ENCODE measurements at regions of chr5 and their contacts with region 1.

Region 1: DNA sequence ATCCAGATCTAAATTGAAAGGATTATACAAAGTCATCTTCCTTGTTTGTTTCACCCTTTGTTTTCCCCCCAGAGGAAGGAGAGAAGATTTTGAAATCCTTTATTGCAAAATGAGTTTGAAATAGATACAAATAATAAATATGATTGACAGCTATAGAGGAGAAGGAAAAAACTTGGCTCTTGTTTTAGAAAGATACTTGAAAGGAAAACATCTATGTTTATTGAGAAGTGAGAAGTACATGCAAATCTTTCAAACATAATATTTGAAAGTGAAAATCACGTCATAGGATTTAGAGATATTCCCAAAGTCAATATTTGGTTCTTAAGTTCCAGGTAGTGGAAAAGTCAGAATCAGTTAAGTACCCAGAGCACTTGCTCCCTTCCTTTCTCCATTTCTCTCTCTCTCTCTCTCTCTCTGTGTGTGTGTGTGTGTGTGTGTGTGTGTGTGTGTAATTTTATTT is 27.2 kb downstream of the PAM start:
- DNase-seq: no peak
- H3K4me3 ChIP-seq: no peak overlapping the region
- H3K27ac ChIP-seq: no peak overlapping the region
- H3K4me1 ChIP-seq: peaks cover 25 to 41% (median 31%) of the 10 kb centered on the region in 4 donors
- H3K27me3 ChIP-seq: no peaks in the 10 kb centered on the region
- CTCF ChIP-seq: no peak
- EP300 ChIP-seq: no peak
- POLR2A ChIP-seq: no peak

Region 2: GRCh38 chr5:102591650-102592049 is 190.7 kb before region 1 on chr5:
- intact Hi-C with region 1: no loop called
- DNase-seq: no peak
- H3K4me3 ChIP-seq: no peak overlapping the region
- H3K27ac ChIP-seq: no peak overlapping the region
- H3K4me1 ChIP-seq: no peaks in the 10 kb centered on the region
- H3K27me3 ChIP-seq: no peaks in the 10 kb centered on the region
- CTCF ChIP-seq: no peak
- EP300 ChIP-seq: no peak
- POLR2A ChIP-seq: no peak

Region 3: DNA sequence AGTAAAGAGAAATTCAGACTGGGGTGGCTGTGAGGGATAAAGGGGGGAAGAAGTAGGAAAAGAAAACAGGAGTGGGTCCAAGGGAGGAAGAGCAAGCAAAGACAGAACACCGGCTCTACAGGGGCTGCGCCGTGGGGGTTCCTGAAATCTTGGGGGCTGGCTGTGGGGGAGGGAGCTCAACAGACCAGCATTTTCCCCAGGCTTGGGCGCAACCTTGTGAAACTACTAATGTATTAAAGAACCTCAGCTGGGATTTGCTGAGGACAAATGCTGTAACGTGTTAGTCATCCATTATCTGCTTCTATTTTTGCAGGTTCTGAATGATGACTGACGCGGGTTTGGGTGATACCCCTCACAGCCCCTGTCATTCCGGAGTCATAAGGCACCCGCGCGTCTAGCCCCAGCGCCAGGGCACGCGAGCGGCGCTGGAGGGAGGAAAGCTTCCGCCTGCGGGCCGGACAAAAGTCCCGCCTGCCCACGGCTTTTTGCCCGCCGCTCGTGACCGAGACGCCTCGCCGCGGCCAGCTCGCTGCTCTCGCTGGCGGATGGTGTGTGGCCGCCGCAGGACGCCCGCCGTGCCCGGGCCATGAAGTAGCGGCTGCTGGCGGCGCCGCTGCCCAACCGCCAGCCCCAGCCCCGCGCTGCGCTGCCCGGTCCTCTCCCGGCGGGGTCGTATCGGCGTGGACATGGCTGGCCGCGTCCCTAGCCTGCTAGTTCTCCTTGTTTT is 83.3 kb after region 1 on chr5:
- intact Hi-C with region 1: loop called (anchors 5 kb)
- DNase-seq: no peak
- H3K4me3 ChIP-seq: peak overlapping the region; percentile 70 to 79 (median 76)
- H3K27ac ChIP-seq: peak overlapping the region; percentile 90 to 92 (median 90)
- H3K4me1 ChIP-seq: peaks cover 23 to 52% (median 35%) of the 10 kb centered on the region in 4 donors
- H3K27me3 ChIP-seq: no peaks in the 10 kb centered on the region
- CTCF ChIP-seq: no peak
- EP300 ChIP-seq: peak; percentile 37
- POLR2A ChIP-seq: no peak

Region 4: DNA sequence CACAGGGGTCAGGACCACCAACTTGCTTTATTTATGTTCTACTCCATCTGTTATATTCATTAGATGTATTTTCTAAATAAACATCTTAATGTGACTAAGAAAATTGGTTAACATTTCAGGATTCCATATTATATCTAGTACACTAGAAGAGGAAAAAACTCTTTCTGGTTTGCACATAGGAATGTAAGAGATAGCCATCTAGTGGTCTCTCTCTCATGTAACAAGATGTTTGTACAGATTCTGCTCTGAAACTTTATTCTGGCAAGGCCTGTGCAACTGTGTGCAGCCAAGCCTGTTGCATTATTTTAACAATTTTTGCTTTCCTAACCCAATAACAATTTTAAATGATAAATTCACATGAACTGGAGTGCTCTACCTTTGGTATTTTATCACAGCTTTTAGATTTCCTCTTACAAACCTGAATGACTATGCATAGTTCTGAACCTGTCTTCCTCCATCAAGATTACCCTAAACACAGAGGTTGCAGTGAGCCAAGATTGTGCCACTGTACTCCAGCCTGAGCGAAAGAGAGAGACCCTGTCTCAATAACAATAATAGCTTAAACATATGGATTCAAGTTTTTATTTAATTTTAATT is 189.5 kb after region 1 on chr5:
- intact Hi-C with region 1: loop called (anchors 2 kb)
- DNase-seq: no peak
- H3K4me3 ChIP-seq: no peak overlapping the region
- H3K27ac ChIP-seq: no peak overlapping the region
- H3K4me1 ChIP-seq: peaks cover 0 to 3% (median 0%) of the 10 kb centered on the region in 4 donors
- H3K27me3 ChIP-seq: no peaks in the 10 kb centered on the region
- CTCF ChIP-seq: peak; percentile 42 to 60 (median 57)
- EP300 ChIP-seq: no peak
- POLR2A ChIP-seq: no peak

Region 5: GRCh38 chr5:103119765-103120606 is 337.6 kb after region 1 on chr5 and contains the starts of genes GIN1 and PPIP5K2:
- intact Hi-C with region 1: loop called (anchors 10 kb)
- DNase-seq: peak; percentile 98
- H3K4me3 ChIP-seq: peak within 1 kb of the TSS; percentile 60 to 92 (median 82)
- H3K27ac ChIP-seq: peak within 1 kb of the TSS; percentile 90 to 91 (median 90)
- H3K4me1 ChIP-seq: peaks cover 4 to 38% (median 37%) of the 10 kb centered on the region in 4 donors
- H3K27me3 ChIP-seq: no peaks in the 10 kb centered on the region
- CTCF ChIP-seq: peak in 1 of 3 experiments; percentile 22
- EP300 ChIP-seq: no peak
- POLR2A ChIP-seq: no peak
- total RNA-seq, gene GIN1: 4.4 to 10.4 (median 7.2) TPM
- total RNA-seq, gene PPIP5K2: 15.6 to 21.6 (median 17.3) TPM

Measured in esophagus muscularis mucosa (tissue), 4 donors.